ENCODE measurements at regions of chr6 and their contacts with region 1.

Region 1: DNA sequence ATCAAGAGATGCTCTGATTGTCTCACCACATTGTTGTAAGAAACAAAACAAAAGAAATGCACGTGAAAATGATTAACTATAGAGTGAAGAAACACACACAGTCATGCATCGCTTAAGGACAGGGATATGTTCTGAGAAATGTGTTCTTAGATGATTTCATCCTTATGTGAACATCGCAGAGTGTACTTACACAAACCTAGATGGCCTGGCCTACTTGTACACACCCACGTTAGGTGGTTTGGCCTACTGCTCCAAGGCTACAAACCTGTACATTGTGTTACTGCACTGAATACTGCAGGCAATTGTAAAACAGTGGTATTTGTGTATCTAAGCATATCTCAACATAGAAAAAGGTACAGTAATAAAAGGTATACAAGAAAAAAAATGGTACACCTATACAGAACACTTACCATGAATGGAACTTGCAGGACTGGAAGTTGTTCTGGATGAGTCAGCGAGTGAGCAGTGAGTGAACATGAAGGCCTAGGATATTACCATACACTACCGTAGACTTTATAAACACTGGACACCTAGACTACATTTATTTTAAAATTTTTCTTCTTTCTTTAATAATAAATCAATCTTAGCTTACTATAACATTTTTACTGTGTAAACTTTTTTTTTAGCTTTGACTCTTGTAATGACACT is 48.6 kb downstream of the FKBP5 start:
- DNase-seq: no peak
- H3K4me3 ChIP-seq: no peak overlapping the region
- H3K27ac ChIP-seq: no peak overlapping the region
- H3K4me1 ChIP-seq: no peaks in the 10 kb centered on the region
- H3K27me3 ChIP-seq: no peaks in the 10 kb centered on the region
- CTCF ChIP-seq: no peak
- POLR2A ChIP-seq: no peak

Region 2: DNA sequence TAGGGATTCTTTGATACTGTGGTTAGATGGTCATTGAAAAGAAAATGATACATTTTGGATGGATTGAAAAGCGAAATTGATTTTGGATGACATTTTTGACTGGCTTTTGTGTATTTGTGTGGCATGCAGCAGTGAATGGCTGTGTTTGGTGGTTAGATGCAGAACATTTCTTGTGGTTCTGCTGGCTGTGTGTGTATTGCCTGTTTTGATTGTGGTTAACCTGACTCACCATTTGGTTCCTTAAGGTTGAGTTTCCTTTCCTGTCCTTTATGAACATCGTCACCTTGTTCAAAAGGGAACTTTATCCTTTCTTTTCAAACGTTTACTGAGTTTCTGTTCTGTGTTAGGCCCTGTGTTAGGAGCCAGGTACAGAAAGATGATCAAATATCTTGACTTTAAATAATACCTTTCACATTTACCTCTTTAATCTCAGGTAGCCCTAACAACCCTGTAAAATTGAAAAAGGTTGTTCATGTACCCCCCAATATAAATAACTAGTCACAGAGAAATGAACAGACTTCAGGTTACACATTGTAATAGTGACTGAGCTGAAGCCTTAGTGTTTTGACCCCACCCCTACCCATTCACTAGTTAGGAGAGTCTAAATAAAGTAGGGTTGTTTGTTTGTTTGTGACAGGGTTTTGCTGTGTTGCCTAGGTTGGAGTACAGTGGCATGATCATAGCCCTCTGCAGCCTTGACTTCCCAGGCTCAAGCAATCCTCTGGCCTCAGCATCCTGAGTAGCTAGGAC is 727.3 kb before region 1 on chr6:
- CTCF ChIA-PET with region 1: no interaction called
- POLR2A ChIA-PET with region 1: no interaction called
- dilution Hi-C with region 1: no loop called
- intact Hi-C with region 1: no loop called
- DNase-seq: peak; percentile 16
- H3K4me3 ChIP-seq: no peak overlapping the region
- H3K27ac ChIP-seq: peak overlapping the region; percentile 67
- H3K4me1 ChIP-seq: peaks cover 20% of the 10 kb centered on the region
- H3K27me3 ChIP-seq: no peaks in the 10 kb centered on the region
- CTCF ChIP-seq: no peak
- POLR2A ChIP-seq: no peak

Region 3: DNA sequence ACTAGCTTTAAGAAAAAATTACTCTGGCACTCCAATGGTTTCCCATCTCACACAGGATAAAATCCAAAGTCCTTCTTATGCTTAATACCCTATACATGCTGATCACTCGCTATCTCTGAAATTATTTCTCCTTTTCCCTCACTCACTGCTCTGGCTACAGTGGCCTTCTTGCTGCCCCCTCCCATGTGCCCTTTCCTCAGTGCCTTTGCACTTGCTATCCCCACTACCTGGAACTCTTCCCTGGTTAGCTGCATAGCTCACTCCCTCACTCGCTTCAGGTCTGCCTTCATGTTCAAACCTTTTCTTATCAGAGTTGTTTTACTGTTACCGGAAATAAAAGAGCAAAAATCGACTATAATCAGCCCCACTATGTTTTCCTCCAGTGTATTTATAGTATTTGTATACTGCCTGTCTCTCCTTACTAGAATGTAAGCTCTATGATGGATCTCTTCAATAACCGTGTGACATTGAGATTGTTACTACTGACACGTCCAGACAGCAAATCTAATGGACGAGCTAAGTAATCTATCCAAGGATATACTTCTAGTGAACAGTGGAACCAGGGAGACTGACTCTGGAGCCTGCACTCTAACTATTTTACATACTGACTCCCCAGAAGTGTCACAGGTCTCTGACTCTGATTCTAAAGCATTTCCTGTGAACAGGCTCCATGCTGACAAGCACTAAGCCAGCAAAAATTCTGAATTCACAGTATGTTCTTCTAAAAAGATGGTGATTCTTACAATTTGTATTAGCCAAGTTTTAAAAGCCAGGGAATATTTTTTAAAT is 23.5 kb after region 1 on chr6:
- CTCF ChIA-PET with region 1: interaction called, 11 read pairs
- POLR2A ChIA-PET with region 1: no interaction called
- dilution Hi-C with region 1: no loop called
- intact Hi-C with region 1: no loop called
- DNase-seq: peak; percentile 72
- H3K4me3 ChIP-seq: no peak overlapping the region
- H3K27ac ChIP-seq: peak overlapping the region; percentile 74
- H3K4me1 ChIP-seq: peaks cover 42% of the 10 kb centered on the region
- H3K27me3 ChIP-seq: no peaks in the 10 kb centered on the region
- CTCF ChIP-seq: no peak
- POLR2A ChIP-seq: no peak

Measured in endothelial cell of umbilical vein (primary cell).